Naive thymus-derived CD4-positive, alpha-beta T cell (primary cell): ENCODE measurements at regions of chr10 and their contacts with region 1.

Region 1: GRCh38 chr10:31707093-31708039 is 221.3 kb downstream of the ARHGAP12 start:
- DNase-seq: peak in 2 of 9 donors; percentile 13 to 64
- ATAC-seq: peak; percentile 82
- H3K4me3 ChIP-seq: no peak overlapping the region
- H3K4me3 Mint-ChIP-seq: peak overlapping the region; percentile 7 to 65 (median 54)
- H3K27ac ChIP-seq: no peak overlapping the region
- H3K27ac Mint-ChIP-seq: peak overlapping the region in 8 of 9 donors; percentile 11 to 85 (median 48)
- H3K4me1 ChIP-seq: peaks cover 0 to 11% of the 10 kb centered on the region in 2 donors
- H3K4me1 Mint-ChIP-seq: peaks cover 11 to 28% (median 16%) of the 10 kb centered on the region in 7 donors
- H3K27me3 ChIP-seq: no peaks in the 10 kb centered on the region
- H3K27me3 Mint-ChIP-seq: no peaks in the 10 kb centered on the region

Region 2: DNA sequence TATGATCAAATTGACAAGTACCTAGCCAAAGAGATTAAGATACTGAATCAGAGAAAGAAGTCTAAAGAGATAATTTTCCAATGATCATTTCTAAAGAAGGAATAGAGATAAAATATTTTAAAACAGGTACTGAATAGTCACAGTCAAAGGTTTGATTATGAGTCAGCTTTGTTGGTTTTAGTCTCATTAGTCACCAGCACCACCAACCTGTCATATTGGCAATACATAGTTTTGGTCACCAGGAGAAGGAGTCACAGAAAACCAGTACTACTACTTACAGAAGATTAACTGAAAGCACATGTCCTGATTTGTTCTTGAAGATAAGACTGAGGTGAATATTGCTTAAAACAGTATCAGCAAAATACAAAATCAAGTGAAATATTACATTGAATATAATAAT is 353.8 kb before region 1 on chr10:
- CTCF ChIA-PET with region 1: no interaction called
- POLR2A ChIA-PET with region 1: no interaction called
- intact Hi-C with region 1: loop called in 1 of 2 experiments (anchors 10 kb)
- DNase-seq: peak in 2 of 9 donors; percentile 21 to 41
- ATAC-seq: peak; percentile 73
- H3K4me3 ChIP-seq: no peak overlapping the region
- H3K4me3 Mint-ChIP-seq: peak overlapping the region in 1 of 10 donors; percentile 8
- H3K27ac ChIP-seq: no peak overlapping the region
- H3K27ac Mint-ChIP-seq: no peak overlapping the region
- H3K4me1 ChIP-seq: peaks cover 4 to 12% of the 10 kb centered on the region in 2 donors
- H3K4me1 Mint-ChIP-seq: peaks cover 35 to 88% (median 76%) of the 10 kb centered on the region in 7 donors
- H3K27me3 ChIP-seq: no peaks in the 10 kb centered on the region
- H3K27me3 Mint-ChIP-seq: no peaks in the 10 kb centered on the region

Region 3: GRCh38 chr10:31557854-31558253 is 149.5 kb before region 1 on chr10:
- CTCF ChIA-PET with region 1: no interaction called
- POLR2A ChIA-PET with region 1: no interaction called
- intact Hi-C with region 1: no loop called
- DNase-seq: no peak
- ATAC-seq: no peak
- H3K4me3 ChIP-seq: no peak overlapping the region
- H3K4me3 Mint-ChIP-seq: no peak overlapping the region
- H3K27ac ChIP-seq: no peak overlapping the region
- H3K27ac Mint-ChIP-seq: no peak overlapping the region
- H3K4me1 ChIP-seq: no peaks in the 10 kb centered on the region
- H3K4me1 Mint-ChIP-seq: no peaks in the 10 kb centered on the region
- H3K27me3 ChIP-seq: peaks cover 0 to 4% of the 10 kb centered on the region in 2 donors
- H3K27me3 Mint-ChIP-seq: peaks cover 2 to 28% (median 15%) of the 10 kb centered on the region in 5 donors

Region 4: DNA sequence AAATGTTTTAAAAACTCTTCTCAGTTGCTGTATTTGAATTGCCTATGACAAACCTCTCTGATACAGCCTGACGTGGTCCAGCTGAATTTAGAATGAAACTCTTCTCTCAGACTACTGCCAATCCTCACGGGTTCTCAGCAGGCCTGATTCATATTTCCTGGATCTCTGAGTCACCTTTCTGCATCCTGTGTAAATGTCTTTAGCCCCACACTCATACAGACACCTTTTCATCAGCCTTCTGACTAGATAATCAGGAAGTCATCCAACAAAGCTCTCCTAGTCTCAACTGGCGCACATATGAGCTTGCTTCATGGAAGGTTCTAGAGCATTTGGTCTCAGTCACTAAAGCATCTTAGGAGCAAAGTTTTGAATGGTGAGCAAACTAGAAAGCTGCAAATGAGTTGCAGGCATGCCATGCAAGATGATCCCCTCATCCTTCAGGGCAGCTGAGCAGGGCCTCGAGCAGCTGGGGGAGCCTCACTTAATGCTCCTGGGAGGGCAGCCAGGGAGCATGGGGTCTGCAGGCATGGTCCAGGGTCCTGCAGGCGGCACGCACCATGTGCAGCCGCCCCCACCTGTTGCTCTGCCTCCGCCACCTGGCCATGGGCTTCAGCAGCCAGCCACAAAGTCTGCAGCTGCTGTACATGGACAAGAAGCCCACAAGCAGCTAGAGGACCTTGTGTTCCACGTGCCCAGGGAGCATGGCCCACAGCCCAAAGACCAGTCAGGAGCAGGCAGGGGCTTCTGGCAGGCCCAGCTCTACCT is 38.4 kb after region 1 on chr10:
- CTCF ChIA-PET with region 1: no interaction called
- POLR2A ChIA-PET with region 1: no interaction called
- intact Hi-C with region 1: loop called (anchors 5 kb)
- DNase-seq: peak in 1 of 9 donors; percentile 45
- ATAC-seq: peak; percentile 50
- H3K4me3 ChIP-seq: no peak overlapping the region
- H3K4me3 Mint-ChIP-seq: peak overlapping the region in 1 of 10 donors; percentile 33
- H3K27ac ChIP-seq: no peak overlapping the region
- H3K27ac Mint-ChIP-seq: peak overlapping the region in 6 of 9 donors; percentile 7 to 83 (median 57)
- H3K4me1 ChIP-seq: peaks cover 0 to 4% of the 10 kb centered on the region in 2 donors
- H3K4me1 Mint-ChIP-seq: peaks cover 0 to 31% (median 6%) of the 10 kb centered on the region in 7 donors
- H3K27me3 ChIP-seq: no peaks in the 10 kb centered on the region
- H3K27me3 Mint-ChIP-seq: no peaks in the 10 kb centered on the region